Esophagus muscularis mucosa (tissue), 4 donors: ENCODE measurements at regions of chr9 and their contacts with region 1.

Region 1: GRCh38 chr9:4315582-4316215 is 15.8 kb upstream of the GLIS3 start:
- DNase-seq: peak; percentile 91
- H3K4me3 ChIP-seq: no peak overlapping the region
- H3K27ac ChIP-seq: no peak overlapping the region
- H3K4me1 ChIP-seq: peaks cover 0 to 5% (median 0%) of the 10 kb centered on the region in 4 donors
- H3K27me3 ChIP-seq: no peaks in the 10 kb centered on the region
- CTCF ChIP-seq: peak; percentile 71 to 87 (median 78)
- EP300 ChIP-seq: no peak
- POLR2A ChIP-seq: no peak

Region 2: DNA sequence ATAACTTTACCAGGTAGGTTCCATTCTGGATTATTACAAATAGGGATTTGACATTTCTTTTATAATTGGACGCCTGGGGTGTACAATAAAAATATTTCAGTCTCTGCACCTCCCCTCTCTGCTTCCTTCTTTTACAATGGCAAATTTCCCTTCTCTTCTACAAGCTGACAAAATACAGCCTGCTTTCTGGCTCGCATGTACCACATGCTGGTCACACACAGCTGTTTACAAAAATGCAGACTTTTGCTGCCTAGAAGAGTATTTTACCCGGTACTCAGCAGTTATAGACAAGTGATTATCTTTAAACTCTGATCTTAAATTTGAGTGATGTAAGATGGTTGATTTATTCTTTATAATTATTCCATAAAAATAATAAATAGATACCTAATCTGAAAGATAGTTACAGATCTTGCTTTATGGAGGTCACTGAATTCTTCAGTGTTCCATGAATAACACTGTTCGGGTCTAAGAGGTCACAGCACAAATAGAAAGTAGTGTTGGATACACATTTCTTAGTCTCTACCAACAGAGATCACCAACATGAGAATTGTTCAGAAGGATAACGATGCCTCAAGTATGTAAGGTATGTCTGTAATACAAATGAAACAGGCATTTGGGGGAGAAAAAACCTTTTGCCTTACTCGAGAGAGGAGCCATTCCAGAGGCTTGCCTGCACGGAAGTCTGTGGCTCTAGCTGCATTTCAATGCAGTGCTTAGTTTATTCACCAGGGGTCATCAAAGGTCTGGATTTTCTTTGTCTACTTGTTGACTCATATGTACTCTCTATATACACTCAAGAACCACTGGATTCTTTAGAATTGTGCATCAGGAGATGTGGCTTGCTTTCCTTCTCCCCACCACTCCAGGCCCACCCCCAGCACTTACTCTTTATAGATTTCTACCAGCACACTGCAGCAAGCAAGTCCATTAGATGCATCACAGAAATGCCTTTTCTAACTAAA is 583.3 kb before region 1 on chr9:
- intact Hi-C with region 1: loop called (anchors 5 kb)
- DNase-seq: no peak
- H3K4me3 ChIP-seq: peak overlapping the region in 2 of 4 donors; percentile 5 to 23
- H3K27ac ChIP-seq: peak overlapping the region in 3 of 4 donors; percentile 1 to 22 (median 14)
- H3K4me1 ChIP-seq: peaks cover 0 to 16% (median 9%) of the 10 kb centered on the region in 4 donors
- H3K27me3 ChIP-seq: no peaks in the 10 kb centered on the region
- CTCF ChIP-seq: peak; percentile 64 to 77 (median 70)
- EP300 ChIP-seq: no peak
- POLR2A ChIP-seq: no peak

Region 3: GRCh38 chr9:4382722-4383317 is 67.1 kb after region 1 on chr9:
- intact Hi-C with region 1: loop called (anchors 5 kb)
- DNase-seq: no peak
- H3K4me3 ChIP-seq: no peak overlapping the region
- H3K27ac ChIP-seq: no peak overlapping the region
- H3K4me1 ChIP-seq: no peaks in the 10 kb centered on the region
- H3K27me3 ChIP-seq: no peaks in the 10 kb centered on the region
- CTCF ChIP-seq: peak; percentile 59 to 63 (median 62)
- EP300 ChIP-seq: no peak
- POLR2A ChIP-seq: no peak

Region 4: GRCh38 chr9:4630836-4631235 is 315.1 kb after region 1 on chr9:
- intact Hi-C with region 1: loop called (anchors 10 kb)
- DNase-seq: no peak
- H3K4me3 ChIP-seq: no peak overlapping the region
- H3K27ac ChIP-seq: no peak overlapping the region
- H3K4me1 ChIP-seq: no peaks in the 10 kb centered on the region
- H3K27me3 ChIP-seq: no peaks in the 10 kb centered on the region
- CTCF ChIP-seq: no peak
- EP300 ChIP-seq: no peak
- POLR2A ChIP-seq: no peak